Activated B cell treated with CpG ODN at 0.5 μM for 24 hours (primary cell): ENCODE measurements at regions of chr1 and their contacts with region 1.

Region 1: GRCh38 chr1:38173157-38173831 is 126.7 kb upstream of the POU3F1 start:
- DNase-seq: no peak
- ATAC-seq: peak; percentile 80
- H3K4me3 Mint-ChIP-seq: peak overlapping the region; percentile 68
- H3K27ac Mint-ChIP-seq: peak overlapping the region; percentile 93
- H3K4me1 Mint-ChIP-seq: peaks cover 37% of the 10 kb centered on the region
- H3K27me3 Mint-ChIP-seq: no peaks in the 10 kb centered on the region
- CTCF ChIP-seq: no peak

Region 2: DNA sequence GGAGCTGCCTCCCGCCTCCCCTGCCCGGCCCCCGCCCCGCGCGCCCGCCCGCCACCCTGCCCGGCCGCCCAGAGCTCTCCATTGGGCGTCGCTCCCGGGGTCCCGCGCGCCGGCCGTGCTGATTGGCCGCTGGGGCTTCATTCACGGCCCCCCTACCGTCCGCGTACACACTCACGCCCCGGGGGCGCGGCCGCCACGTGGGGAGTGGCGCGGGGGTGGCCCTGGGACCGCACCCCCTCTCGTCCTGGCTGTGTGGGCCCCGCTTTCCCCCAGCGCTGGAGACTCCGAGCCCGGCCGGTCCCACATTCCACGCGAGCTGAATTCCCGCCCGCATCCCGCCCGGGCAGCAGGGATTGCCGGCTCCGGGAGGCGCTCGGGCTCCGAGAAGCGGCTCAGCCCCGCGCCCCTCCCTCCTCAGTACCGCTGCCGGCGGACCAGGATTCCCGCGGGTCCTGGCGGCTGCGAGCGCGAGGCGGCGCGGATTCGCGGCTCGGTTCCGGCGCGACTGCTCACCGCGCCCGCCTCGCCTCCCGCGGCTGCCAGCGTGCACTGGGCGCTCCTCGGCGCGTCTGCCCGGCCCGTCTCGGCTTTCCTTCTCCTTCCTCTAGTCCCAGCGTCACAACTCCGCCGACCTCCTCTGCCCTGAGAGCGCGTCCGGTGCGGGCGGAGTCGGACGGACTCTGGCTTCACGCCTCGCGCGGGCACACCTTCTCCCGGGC is 126.3 kb before region 1 on chr1:
- CTCF ChIA-PET with region 1: no interaction called
- POLR2A ChIA-PET with region 1: interaction called, 12 read pairs
- intact Hi-C with region 1: loop called (anchors 5 kb)
- DNase-seq: peak; percentile 78
- ATAC-seq: peak; percentile 86
- H3K4me3 Mint-ChIP-seq: peak overlapping the region; percentile 83
- H3K27ac Mint-ChIP-seq: peak overlapping the region; percentile 18
- H3K4me1 Mint-ChIP-seq: peaks cover 29% of the 10 kb centered on the region
- H3K27me3 Mint-ChIP-seq: peaks cover 21% of the 10 kb centered on the region
- CTCF ChIP-seq: no peak

Region 3: GRCh38 chr1:38152351-38153065 is 20.8 kb before region 1 on chr1:
- CTCF ChIA-PET with region 1: interaction called, 9 read pairs
- POLR2A ChIA-PET with region 1: interaction called, 54 read pairs
- intact Hi-C with region 1: loop called (anchors 1 kb)
- DNase-seq: no peak
- ATAC-seq: peak; percentile 74
- H3K4me3 Mint-ChIP-seq: peak overlapping the region; percentile 4
- H3K27ac Mint-ChIP-seq: peak overlapping the region; percentile 80
- H3K4me1 Mint-ChIP-seq: peaks cover 43% of the 10 kb centered on the region
- H3K27me3 Mint-ChIP-seq: no peaks in the 10 kb centered on the region
- CTCF ChIP-seq: no peak

Region 4: GRCh38 chr1:38481871-38482826 is 308.9 kb after region 1 on chr1:
- CTCF ChIA-PET with region 1: no interaction called
- POLR2A ChIA-PET with region 1: interaction called, 5 read pairs
- intact Hi-C with region 1: loop called (anchors 2 kb)
- DNase-seq: no peak
- ATAC-seq: peak; percentile 63
- H3K4me3 Mint-ChIP-seq: no peak overlapping the region
- H3K27ac Mint-ChIP-seq: peak overlapping the region; percentile 80
- H3K4me1 Mint-ChIP-seq: peaks cover 52% of the 10 kb centered on the region
- H3K27me3 Mint-ChIP-seq: no peaks in the 10 kb centered on the region
- CTCF ChIP-seq: no peak

Region 5: DNA sequence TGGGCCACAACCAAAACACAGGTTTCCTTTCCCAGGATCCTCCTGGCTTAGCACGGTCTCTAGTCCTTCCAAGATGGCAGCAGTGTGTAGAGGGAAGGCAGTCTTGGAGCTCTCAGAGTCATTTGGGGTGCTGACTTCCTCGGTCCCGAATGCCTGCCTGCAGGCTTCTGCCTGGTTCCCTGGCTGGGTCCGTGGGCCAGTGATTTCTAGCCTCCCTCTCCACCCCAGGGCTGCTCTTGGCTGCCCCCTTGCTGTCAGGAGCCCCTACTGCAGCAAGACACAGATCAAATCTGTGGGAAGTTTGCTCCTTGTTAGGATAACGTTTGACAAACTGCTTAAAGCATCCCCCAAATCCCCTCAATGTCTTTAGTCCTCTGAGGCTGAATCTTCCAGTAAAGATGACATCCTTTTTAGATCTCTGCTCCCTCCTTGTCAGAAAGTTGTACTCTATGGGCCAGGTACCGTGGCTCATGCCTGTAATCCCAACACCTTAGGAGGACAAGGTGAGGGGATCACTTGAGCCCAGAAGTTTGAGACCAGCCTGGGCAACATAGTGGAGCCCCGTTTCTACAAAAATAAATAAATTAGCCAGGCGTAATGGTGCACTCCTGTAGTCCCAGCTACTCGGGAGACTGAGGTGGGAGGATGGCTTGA is 413.8 kb after region 1 on chr1:
- CTCF ChIA-PET with region 1: no interaction called
- POLR2A ChIA-PET with region 1: no interaction called
- intact Hi-C with region 1: loop called (anchors 5 kb)
- DNase-seq: peak; percentile 46
- ATAC-seq: peak; percentile 83
- H3K4me3 Mint-ChIP-seq: no peak overlapping the region
- H3K27ac Mint-ChIP-seq: peak overlapping the region; percentile 33
- H3K4me1 Mint-ChIP-seq: peaks cover 13% of the 10 kb centered on the region
- H3K27me3 Mint-ChIP-seq: no peaks in the 10 kb centered on the region
- CTCF ChIP-seq: no peak